Activated T-helper 1 cell treated with anti-CD3 and anti-CD28 coated beads, Interleukin-12 subunit alpha, Interleukin-12 subunit beta, Interleukin-2, Interleukin-4 antibody, amounts not matched to agents 30 ng/mL and 10 ng/mL and 1 ng/mL, durations not matched to agents 14 hours and 24 hours and 36 hours (primary cell): ENCODE measurements at regions of chr19 and their contacts with region 1.

Region 1: GRCh38 chr19:29873024-29873800 is 61.4 kb downstream of the CCNE1 start:
- DNase-seq: peak; percentile 61
- H3K4me3 Mint-ChIP-seq: peak overlapping the region; percentile 61
- H3K27ac Mint-ChIP-seq: no peak overlapping the region
- H3K4me1 Mint-ChIP-seq: peaks cover 11% of the 10 kb centered on the region
- H3K27me3 Mint-ChIP-seq: peaks cover 8% of the 10 kb centered on the region

Region 2: DNA sequence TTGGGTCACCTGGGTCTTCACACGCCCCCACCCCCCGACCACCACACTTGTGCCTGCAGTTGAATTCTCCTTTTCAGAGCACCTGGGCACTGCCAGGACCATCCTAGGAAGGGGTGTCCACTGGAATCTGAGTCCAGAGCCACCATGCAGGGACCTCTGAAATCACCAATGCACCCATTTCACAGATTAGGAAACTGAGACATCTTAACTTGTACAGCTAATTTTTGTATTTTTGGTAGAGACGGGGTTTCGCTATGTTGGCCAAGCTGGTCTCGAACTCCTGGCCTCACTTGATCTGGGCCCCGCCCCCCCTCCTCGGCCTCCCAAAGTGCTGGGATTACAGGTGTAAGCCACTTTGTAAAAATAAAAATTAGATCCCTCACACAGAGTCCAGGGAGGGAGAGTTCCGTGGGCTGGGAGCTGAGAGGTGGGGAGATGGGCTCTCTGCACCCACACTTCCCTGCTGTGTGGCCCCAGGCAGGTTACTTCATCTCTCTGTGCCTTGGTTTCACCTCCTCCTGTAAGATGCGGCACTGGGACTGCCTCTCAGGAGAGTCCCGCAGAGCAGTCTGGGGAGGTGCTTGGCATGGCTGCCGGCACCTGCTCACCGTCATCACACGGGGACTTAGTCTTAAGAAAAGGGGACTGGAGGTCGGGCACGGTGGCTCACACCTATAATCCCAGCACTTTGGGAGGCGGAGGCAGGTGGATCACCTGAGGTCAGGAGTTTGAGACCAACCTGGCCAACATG is 112.3 kb before region 1 on chr19:
- intact Hi-C with region 1: loop called (anchors 1 kb)
- DNase-seq: no peak
- H3K4me3 Mint-ChIP-seq: peak overlapping the region; percentile 24
- H3K27ac Mint-ChIP-seq: no peak overlapping the region
- H3K4me1 Mint-ChIP-seq: no peaks in the 10 kb centered on the region
- H3K27me3 Mint-ChIP-seq: peaks cover 2% of the 10 kb centered on the region

Region 3: DNA sequence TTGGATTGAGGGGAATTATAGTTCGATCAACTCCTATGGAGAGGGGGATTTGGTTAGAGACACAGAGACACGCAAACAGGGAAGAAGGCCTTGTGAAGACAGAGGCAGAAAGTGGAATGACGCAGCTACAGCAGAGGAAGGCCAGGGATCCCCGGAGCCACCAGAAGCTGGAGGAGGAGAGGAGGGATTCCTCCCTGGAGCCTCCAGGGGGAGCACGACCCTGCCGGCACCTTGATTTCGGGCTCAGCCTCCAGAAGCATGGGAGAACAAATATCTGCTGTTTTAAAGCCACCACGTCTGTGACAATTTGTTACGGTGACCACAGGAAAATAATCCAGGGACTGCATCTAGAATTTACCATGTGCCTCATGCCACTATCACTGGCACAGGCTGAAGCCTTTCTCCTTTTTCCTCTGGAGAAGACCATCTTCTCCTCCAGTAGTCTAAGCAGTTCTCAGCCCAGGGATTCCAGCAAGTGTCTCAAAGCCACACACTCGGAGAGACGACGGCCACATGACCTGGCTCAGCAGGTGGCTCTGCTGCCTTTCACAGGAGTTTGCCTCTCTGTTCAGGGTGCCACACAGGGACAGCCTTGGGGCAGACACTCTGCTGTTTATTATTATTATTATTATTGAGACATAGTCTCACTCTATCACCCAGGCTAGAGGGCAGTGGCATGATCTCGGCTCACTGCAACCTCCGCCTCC is 101.4 kb before region 1 on chr19:
- intact Hi-C with region 1: loop called (anchors 1 kb)
- DNase-seq: no peak
- H3K4me3 Mint-ChIP-seq: no peak overlapping the region
- H3K27ac Mint-ChIP-seq: no peak overlapping the region
- H3K4me1 Mint-ChIP-seq: peaks cover 13% of the 10 kb centered on the region
- H3K27me3 Mint-ChIP-seq: peaks cover 2% of the 10 kb centered on the region

Region 4: DNA sequence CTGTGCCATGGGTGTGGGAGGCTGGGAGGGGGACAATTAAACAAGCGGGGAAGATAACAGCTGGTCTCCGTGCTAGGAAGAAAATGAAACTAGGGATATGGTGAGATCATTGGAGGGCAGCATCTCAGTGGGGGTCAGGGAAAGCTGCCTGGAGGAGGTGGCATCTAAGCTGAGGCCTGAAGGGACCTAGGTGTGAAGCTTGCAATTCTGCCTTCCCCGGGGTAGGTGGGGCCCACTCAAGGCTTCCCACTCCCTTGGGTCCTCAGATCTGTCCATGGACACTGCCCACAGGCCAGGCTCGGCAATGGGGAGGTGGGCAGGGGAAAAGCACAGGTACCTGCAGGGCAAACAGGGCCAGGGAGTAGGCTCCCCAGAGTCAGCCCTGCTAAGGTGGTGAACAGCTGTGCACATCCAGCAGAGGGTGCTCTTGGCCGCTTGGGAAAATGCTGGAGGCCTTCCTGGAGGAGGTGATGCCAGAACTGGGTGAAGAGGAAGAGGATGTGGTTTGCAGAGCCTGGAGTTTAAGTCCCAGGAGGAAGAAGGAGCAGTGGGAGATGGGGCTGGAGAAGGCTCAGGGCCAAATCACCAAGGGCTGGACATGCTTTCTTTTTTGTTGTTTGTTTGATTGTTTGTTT is 87.1 kb before region 1 on chr19:
- intact Hi-C with region 1: loop called (anchors 1 kb)
- DNase-seq: no peak
- H3K4me3 Mint-ChIP-seq: no peak overlapping the region
- H3K27ac Mint-ChIP-seq: no peak overlapping the region
- H3K4me1 Mint-ChIP-seq: peaks cover 4% of the 10 kb centered on the region
- H3K27me3 Mint-ChIP-seq: peaks cover 2% of the 10 kb centered on the region

Region 5: DNA sequence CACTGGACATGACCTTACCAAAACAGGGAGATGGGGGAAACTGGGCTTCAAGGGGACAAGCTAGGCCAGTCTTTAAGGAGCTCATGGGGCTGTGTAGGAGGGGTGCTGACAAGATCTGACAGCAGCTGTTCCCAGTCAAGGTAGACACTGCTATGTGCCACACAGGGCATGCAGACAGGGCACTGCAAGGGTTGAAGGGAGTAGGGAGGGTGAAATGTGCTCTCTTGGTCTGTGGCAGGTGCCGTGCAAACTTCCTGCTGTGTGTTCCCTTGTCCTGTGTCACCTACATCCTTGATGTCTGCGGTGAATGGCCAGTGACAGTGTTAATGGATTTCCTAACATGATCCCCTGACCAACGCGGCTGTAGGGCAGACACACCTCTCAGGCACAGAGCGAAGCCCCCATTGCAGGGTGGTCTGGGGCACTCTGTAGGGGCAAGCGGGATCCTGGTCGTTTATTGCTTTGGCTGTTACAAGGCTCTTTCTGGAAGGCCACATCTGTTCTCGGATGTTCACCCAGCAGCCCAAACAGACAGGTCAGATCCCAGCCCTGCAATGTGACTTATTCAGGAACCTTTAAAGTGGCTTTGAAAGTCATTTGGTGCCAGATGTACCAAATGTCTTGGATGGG is 299.5 kb after region 1 on chr19:
- intact Hi-C with region 1: no loop called
- DNase-seq: no peak
- H3K4me3 Mint-ChIP-seq: no peak overlapping the region
- H3K27ac Mint-ChIP-seq: no peak overlapping the region
- H3K4me1 Mint-ChIP-seq: no peaks in the 10 kb centered on the region
- H3K27me3 Mint-ChIP-seq: no peaks in the 10 kb centered on the region